ENCODE measurements at regions of chr6 and their contacts with region 1.

Region 1: DNA sequence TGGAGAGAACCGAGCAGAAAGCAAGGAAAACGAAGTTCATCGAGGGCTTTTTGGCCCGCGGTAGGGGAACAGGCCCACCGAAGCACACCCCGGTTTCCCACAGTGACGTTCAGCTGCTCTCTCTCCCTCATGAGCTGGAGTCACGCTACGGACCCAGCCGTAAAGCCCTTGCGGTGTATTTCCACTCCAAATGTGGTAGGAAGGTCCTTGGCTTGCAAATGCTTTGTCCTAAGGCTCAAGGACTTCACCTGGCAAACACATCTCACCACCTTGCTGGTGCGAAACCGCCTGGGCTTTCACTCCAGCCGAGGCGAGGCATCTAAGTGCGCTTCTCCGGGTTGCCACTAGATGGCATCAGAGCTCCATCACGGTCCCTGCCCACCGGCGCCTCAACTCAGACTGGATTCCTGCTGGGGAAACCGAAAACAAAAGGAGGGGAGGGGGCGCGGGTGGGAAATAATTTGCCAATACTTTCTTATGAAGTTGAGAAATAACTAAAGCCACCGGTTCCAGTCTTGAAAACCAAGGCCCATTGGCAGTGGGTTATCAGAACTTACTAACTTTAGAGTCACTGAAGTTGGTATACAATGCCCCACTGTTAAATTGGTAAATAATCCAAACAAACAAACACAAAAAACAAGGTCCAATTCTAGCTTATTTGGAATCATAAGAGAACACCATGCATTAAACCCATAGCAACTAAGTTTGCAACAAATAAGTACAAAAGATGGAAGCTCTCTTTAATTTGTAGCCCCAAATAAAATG is 13.4 kb upstream of the FOXC1 start:
- DNase-seq: peak; percentile 56 to 74
- ATAC-seq: peak; percentile 84 to 95 (median 90)
- H3K4me3 ChIP-seq: peak overlapping the region; percentile 31
- H3K27ac ChIP-seq: no peak overlapping the region
- H3K4me1 ChIP-seq: no peaks in the 10 kb centered on the region
- H3K27me3 ChIP-seq: peaks cover 0 to 35% (median 22%) of the 10 kb centered on the region in 3 donors
- CTCF ChIP-seq: peak; percentile 96

Region 2: DNA sequence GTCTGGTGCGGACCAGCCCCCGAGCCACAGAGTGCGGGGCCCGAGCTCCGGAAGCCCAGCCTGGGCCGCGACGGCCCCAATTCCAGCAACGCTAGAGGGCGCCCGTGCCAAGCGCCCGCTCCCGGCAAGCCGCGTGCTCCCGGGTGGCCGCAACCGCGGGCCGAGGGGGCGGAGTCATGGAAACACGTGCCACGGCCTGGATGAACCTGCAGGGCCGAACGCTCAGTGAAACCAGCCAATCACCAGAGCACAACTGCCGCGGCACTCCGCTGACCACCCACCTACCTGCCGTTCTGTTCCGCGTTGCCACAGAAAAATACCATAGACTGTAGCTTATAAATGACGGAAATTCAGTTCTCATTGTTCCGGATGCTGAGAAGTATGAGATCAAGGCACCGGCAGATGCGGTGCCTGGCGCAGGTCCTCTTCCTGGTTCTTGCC is 72.2 kb before region 1 on chr6:
- intact Hi-C with region 1: loop called in 1 of 2 experiments (anchors 2 kb)
- DNase-seq: peak; percentile 79 to 86
- ATAC-seq: peak; percentile 71 to 80 (median 74)
- H3K4me3 ChIP-seq: peak overlapping the region; percentile 44
- H3K27ac ChIP-seq: no peak overlapping the region
- H3K4me1 ChIP-seq: peaks cover 20% of the 10 kb centered on the region
- H3K27me3 ChIP-seq: peaks cover 0 to 11% (median 9%) of the 10 kb centered on the region in 3 donors
- CTCF ChIP-seq: peak; percentile 69

Region 3: DNA sequence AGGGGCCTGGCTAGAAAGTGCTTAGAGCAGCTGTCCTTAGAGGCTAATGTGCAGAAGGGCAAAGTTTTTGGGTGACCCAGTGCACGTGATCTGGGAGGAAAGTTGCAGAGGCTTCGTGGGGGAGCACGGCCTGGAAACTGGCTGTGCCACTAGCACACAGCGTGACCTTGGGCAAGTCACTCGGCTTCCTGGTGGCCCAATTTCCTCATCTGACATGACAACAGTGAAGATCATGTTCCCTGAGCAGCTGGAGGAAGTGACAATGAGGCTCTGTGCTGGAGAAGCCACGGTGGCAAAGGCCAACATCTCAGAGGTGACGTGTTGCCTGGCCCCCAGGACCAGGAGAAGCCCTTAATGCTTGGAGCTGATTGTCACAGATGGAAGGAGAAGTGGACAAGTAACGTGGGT is 113.0 kb after region 1 on chr6:
- intact Hi-C with region 1: no loop called
- DNase-seq: no peak
- ATAC-seq: peak in 3 of 4 donors; percentile 46 to 87 (median 77)
- H3K4me3 ChIP-seq: no peak overlapping the region
- H3K27ac ChIP-seq: no peak overlapping the region
- H3K4me1 ChIP-seq: no peaks in the 10 kb centered on the region
- H3K27me3 ChIP-seq: no peaks in the 10 kb centered on the region
- CTCF ChIP-seq: no peak

Region 4: GRCh38 chr6:2353412-2354137 is 757.3 kb after region 1 on chr6:
- intact Hi-C with region 1: loop called in 1 of 2 experiments (anchors 5 kb)
- DNase-seq: peak in 1 of 2 donors; percentile 51
- ATAC-seq: peak in 3 of 4 donors; percentile 65 to 79 (median 68)
- H3K4me3 ChIP-seq: no peak overlapping the region
- H3K27ac ChIP-seq: no peak overlapping the region
- H3K4me1 ChIP-seq: no peaks in the 10 kb centered on the region
- H3K27me3 ChIP-seq: no peaks in the 10 kb centered on the region
- CTCF ChIP-seq: peak; percentile 78

Region 5: DNA sequence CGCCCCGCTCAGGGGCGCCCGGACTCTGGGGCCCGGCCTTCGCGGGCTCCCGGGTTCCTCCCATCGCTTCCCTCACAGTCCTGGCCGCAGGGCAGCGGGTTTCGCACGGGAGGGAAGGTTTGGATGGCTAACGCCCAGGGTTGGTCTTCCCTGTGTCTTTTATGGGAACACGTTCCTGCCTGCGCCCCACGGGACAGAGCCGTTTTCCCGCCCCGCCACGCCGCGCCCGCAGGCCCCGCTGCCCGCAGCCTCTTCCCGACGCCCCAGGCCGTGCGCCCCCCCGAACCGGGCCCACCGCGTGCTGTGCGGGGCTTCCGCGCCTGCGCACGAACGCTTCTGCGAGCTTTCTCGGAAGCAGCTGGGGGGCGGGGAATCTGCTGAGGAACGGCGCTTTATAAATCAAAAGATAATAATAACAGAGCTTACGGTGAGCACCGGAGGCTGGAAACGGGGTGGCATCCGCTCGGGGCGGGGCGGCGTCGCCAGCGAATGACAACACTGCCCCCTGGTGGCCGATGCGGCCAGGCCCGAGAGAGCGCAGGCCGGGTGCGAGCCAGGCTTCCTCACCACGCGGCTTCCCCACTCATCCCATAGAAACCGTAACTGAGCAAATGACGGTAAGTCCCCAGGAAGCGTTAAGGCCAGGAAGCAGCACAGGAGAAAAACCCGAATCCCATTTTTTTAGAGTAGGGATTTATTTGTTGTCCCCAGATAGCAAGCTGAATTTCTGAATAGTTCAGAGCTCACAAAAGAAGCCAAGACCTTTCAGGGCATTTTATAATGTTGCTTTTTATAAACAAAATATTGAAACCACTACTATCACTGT is 1038.1 kb after region 1 on chr6:
- intact Hi-C with region 1: loop called (anchors 1 to 5 kb)
- DNase-seq: peak; percentile 86 to 90
- ATAC-seq: peak; percentile 86 to 92 (median 88)
- H3K4me3 ChIP-seq: peak overlapping the region; percentile 65
- H3K27ac ChIP-seq: peak overlapping the region; percentile 75
- H3K4me1 ChIP-seq: peaks cover 30% of the 10 kb centered on the region
- H3K27me3 ChIP-seq: no peaks in the 10 kb centered on the region
- CTCF ChIP-seq: peak; percentile 99

Region 6: DNA sequence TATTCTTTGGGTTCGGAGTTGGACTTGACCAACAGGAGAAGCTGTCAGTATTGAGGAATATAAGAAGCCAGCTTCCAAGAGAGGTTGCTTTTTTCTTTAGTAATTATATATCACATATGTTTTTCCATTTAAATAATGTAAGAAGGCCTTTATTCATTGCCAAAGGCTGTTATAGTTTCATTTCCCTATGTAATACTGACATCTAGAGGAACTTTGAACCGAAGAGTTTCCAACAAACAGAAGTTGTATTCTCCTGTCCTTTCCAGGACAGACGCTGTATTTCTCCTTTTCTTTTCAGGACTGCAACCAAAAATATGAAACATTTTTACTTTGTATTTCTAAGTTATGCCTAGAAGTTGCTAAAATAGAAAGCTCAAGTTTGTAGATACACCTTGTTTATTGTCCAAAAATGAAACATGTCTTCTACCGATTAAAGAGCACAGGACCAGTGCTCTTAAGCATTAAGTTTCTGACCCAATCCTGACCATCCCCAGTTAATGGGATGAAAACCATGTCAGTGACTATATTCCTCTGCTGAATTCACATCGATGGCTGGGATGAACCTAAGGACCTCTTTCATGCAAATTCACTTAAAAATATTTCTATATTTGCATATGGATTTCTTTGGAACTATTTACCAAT is 1099.3 kb after region 1 on chr6:
- intact Hi-C with region 1: loop called in 1 of 2 experiments (anchors 5 kb)
- DNase-seq: no peak
- ATAC-seq: peak in 3 of 4 donors; percentile 45 to 58 (median 47)
- H3K4me3 ChIP-seq: no peak overlapping the region
- H3K27ac ChIP-seq: no peak overlapping the region
- H3K4me1 ChIP-seq: no peaks in the 10 kb centered on the region
- H3K27me3 ChIP-seq: no peaks in the 10 kb centered on the region
- CTCF ChIP-seq: peak; percentile 54